Activated CD4-positive, alpha-beta memory T cell treated with anti-CD3 and anti-CD28 coated beads, Interleukin-2, amount 10 ng/mL, durations not matched to agents 7 days and 5 days (primary cell): ENCODE measurements at regions of chr3 and their contacts with region 1.

Region 1: DNA sequence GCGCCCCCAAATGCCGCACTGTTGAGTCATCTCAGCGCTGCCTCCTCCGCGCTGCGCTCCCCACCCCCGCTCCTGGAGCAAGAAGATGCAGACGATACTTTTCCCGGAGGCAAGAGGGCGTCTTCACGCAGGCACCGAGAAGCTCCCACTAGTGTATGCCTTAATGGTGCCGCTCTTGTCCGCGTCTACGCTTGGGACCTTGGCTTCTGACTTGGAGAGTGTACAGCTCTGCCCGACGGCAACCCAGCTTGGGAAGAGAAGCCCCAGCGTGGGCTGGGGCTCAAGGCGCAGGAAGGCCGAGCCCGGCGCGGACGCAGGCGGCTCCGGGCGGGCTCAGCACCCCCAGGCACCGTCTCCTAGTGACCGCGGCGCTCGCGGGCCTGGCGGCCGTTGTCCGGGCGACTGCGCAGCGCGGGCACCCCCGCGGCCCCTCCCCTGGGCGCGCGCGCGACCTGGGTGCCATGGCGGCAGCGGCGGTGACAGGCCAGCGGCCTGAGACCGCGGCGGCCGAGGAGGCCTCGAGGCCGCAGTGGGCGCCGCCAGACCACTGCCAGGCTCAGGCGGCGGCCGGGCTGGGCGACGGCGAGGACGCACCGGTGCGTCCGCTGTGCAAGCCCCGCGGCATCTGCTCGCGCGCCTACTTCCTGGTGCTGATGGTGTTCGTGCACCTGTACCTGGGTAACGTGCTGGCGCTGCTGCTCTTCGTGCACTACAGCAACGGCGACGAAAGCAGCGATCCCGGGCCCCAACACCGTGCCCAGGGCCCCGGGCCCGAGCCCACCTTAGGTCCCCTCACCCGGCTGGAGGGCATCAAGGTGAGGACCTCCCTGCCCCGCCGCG is at the start of gene P4HTM:
- DNase-seq: peak; percentile 79
- H3K4me3 Mint-ChIP-seq: peak within 1 kb of the TSS; percentile 92
- H3K27ac Mint-ChIP-seq: peak within 1 kb of the TSS; percentile 90
- H3K4me1 Mint-ChIP-seq: peaks cover 45% of the 10 kb centered on the region
- H3K27me3 Mint-ChIP-seq: no peaks in the 10 kb centered on the region
- total RNA-seq, gene P4HTM: 48.4 to 49.9 TPM

Region 2: GRCh38 chr3:48394391-48394790 is 595.6 kb before region 1 on chr3:
- CTCF ChIA-PET with region 1: no interaction called
- POLR2A ChIA-PET with region 1: no interaction called
- DNase-seq: no peak
- H3K4me3 Mint-ChIP-seq: no peak overlapping the region
- H3K27ac Mint-ChIP-seq: no peak overlapping the region
- H3K4me1 Mint-ChIP-seq: no peaks in the 10 kb centered on the region
- H3K27me3 Mint-ChIP-seq: peaks cover 16% of the 10 kb centered on the region

Region 3: GRCh38 chr3:49007068-49007770 is 17.2 kb after region 1 on chr3 and contains the start of gene WDR6:
- CTCF ChIA-PET with region 1: interaction called, 124 read pairs
- POLR2A ChIA-PET with region 1: interaction called, 190 read pairs
- DNase-seq: peak; percentile 98
- H3K4me3 Mint-ChIP-seq: peak within 1 kb of the TSS; percentile 99
- H3K27ac Mint-ChIP-seq: peak within 1 kb of the TSS; percentile 99
- H3K4me1 Mint-ChIP-seq: peaks cover 34% of the 10 kb centered on the region
- H3K27me3 Mint-ChIP-seq: no peaks in the 10 kb centered on the region
- total RNA-seq, gene WDR6: 135 to 148 TPM

Region 4: GRCh38 chr3:49013755-49014628 is 24.0 kb after region 1 on chr3:
- CTCF ChIA-PET with region 1: interaction called, 124 read pairs
- POLR2A ChIA-PET with region 1: interaction called, 190 read pairs
- DNase-seq: peak; percentile 59
- H3K4me3 Mint-ChIP-seq: no peak overlapping the region
- H3K27ac Mint-ChIP-seq: no peak overlapping the region
- H3K4me1 Mint-ChIP-seq: peaks cover 37% of the 10 kb centered on the region
- H3K27me3 Mint-ChIP-seq: no peaks in the 10 kb centered on the region